BJ (cell line): ENCODE measurements at regions of chr3 and their contacts with region 1.

Region 1: DNA sequence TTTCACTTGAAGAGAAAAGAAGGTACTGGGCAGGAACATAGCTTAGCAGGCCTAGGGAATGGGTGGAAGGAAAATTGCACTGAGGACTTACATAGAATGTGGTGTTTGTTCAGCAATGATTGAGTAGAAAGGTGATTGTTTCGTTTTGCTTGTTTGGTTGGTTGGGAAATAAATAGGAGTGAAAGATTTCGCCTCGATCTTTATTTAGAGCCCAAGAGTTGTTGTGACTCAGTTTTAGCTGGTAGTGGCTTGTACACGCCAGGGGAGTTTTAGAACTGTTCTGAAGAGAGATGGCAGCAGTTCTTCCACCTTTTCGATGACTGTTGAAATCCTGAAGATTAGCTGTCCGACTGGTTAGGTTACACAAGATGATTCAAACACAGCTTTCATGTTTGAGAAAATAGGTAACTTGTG is 1.2 kb downstream of the ARL8B start:
- DNase-seq: no peak
- H3K4me3 ChIP-seq: peak overlapping the region; percentile 88
- H3K27me3 ChIP-seq: no peaks in the 10 kb centered on the region
- CTCF ChIP-seq: no peak

Region 2: GRCh38 chr3:4751502-4752101 is 371.7 kb before region 1 on chr3:
- CTCF ChIA-PET with region 1: no interaction called
- POLR2A ChIA-PET with region 1: no interaction called
- DNase-seq: peak; percentile 86
- H3K4me3 ChIP-seq: no peak overlapping the region
- H3K27me3 ChIP-seq: peaks cover 4% of the 10 kb centered on the region; the same call in 1 of the 2 replicates
- CTCF ChIP-seq: no peak

Region 3: GRCh38 chr3:5136211-5136918 is 13.0 kb after region 1 on chr3:
- CTCF ChIA-PET with region 1: interaction called, 13 read pairs
- POLR2A ChIA-PET with region 1: interaction called, 7 read pairs
- DNase-seq: no peak
- H3K4me3 ChIP-seq: no peak overlapping the region
- H3K27me3 ChIP-seq: no peaks in the 10 kb centered on the region
- CTCF ChIP-seq: peak; percentile 34